ENCODE measurements at regions of chr12 and their contacts with region 1.

Region 1: DNA sequence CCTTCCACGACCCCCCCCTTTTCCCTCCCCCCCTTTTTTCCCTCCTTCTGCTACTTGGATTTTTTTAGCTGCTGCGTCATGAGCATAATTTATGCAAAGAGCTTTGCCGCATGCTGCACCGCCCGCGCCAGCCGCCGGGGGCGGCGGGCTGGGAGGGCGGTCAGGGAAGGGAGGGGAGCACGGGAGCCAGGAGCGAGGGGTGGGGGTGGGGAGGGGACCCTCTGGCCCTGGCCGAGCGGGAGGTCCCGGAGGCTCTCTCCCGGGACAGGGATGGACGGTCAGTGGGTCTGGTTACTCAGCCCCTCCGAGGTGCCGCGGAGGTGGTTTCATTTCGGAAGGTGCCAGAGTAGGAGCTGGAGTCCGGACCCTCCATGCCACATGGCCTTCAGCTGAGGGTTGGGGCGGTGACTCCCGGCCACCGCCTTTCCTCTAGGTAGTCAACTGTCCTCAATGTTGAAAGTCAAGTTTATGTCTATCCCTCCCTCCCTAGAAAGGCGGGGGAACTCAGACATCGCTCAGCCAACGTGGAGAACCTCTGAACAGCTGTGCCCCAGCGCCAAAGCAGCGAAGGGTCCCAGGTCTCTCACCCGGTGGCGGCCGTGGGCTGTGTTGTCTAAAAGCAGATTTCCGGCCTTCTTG is at the start of gene POU6F1:
- DNase-seq: peak; percentile 83
- H3K4me3 ChIP-seq: peak within 1 kb of the TSS; percentile 69
- H3K27ac ChIP-seq: peak within 1 kb of the TSS; percentile 40
- H3K4me1 ChIP-seq: peaks cover 21% of the 10 kb centered on the region
- CTCF ChIP-seq: peak; percentile 61
- total RNA-seq, gene POU6F1: 1.2 and 2.6 TPM in 2 replicates

Region 2: GRCh38 chr12:51083126-51083833 is 134.8 kb before region 1 on chr12 and contains the start of gene CSRNP2:
- CTCF ChIA-PET with region 1: no interaction called
- POLR2A ChIA-PET with region 1: interaction called, 6 read pairs
- intact Hi-C with region 1: loop called (anchors 10 kb)
- DNase-seq: peak; percentile 95
- H3K4me3 ChIP-seq: peak within 1 kb of the TSS; percentile 90
- H3K27ac ChIP-seq: no peak within 1 kb of the TSS
- H3K4me1 ChIP-seq: peaks cover 23% of the 10 kb centered on the region
- CTCF ChIP-seq: 0 out of 2 replicates have a peak, but pooled peaks have one; percentile 24
- total RNA-seq, gene CSRNP2: 10.4 and 11.7 TPM in 2 replicates

Region 3: DNA sequence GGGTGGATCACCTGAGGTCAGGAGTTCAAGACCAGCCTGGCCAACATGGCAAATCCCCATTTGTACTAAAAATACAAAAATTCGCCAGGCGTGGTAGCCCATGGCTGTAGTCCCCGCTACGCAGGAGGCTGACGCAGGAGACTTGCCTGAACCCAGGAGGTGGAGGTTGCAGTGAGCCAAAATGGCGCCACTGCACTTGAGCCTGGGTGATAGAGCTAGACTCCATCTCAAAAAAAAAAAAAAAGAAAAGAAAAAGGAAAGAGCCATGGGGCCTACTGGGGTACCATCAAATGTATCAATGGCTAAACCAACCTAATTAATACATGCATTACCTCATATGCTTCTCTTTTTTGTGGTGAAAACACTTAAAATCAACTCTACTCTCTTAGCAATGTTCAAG is 55.9 kb before region 1 on chr12:
- CTCF ChIA-PET with region 1: no interaction called
- POLR2A ChIA-PET with region 1: no interaction called
- intact Hi-C with region 1: no loop called
- DNase-seq: no peak
- H3K4me3 ChIP-seq: no peak overlapping the region
- H3K27ac ChIP-seq: no peak overlapping the region
- H3K4me1 ChIP-seq: no peaks in the 10 kb centered on the region
- CTCF ChIP-seq: no peak

Region 4: GRCh38 chr12:51172515-51173431 is 45.3 kb before region 1 on chr12 and contains the start of gene TFCP2:
- CTCF ChIA-PET with region 1: no interaction called
- POLR2A ChIA-PET with region 1: no interaction called
- intact Hi-C with region 1: loop called (anchors 5 kb)
- DNase-seq: peak; percentile 82
- H3K4me3 ChIP-seq: peak within 1 kb of the TSS; percentile 80
- H3K27ac ChIP-seq: peak within 1 kb of the TSS; percentile 3
- H3K4me1 ChIP-seq: peaks cover 8% of the 10 kb centered on the region
- CTCF ChIP-seq: no peak
- total RNA-seq, gene TFCP2: 7.1 and 7.2 TPM in 2 replicates

Region 5: DNA sequence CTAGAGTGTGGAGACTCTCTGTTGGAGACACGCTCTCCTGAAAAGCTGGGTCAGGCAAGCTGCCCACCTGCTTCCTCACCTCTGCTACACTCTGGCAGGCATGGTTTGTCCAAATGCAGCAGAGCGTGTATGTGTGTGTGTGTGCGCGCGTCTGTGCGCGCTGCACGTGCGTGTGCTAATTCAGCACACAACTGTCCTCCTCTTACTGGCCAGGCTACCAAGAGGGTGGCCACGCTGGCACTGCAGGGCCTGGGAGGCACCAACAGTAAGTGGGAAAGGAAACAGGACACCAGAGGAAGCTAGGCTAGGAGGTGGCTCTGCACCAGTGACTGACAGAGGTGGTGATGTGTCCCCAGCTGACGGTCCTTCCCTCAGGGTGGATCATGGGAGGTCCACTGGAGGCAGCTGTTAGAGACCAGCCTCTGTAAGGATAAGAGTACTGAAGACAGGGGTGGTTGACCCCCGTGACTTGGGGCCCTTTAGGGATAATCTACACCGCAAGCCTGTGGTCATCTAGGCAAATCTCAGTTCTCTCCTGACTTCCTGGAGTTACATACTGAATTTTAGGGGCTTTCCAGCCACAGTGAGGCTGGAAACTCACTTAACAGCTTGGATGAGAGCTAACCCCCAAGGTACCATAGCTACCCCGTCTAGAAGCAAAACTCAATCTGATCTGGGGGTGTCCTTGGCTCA is 29.6 kb before region 1 on chr12:
- CTCF ChIA-PET with region 1: no interaction called
- POLR2A ChIA-PET with region 1: interaction called, 9 read pairs
- intact Hi-C with region 1: loop called (anchors 2 kb)
- DNase-seq: peak; percentile 76
- H3K4me3 ChIP-seq: peak overlapping the region; percentile 57
- H3K27ac ChIP-seq: peak overlapping the region; percentile 67
- H3K4me1 ChIP-seq: peaks cover 52% of the 10 kb centered on the region
- CTCF ChIP-seq: no peak

Region 6: DNA sequence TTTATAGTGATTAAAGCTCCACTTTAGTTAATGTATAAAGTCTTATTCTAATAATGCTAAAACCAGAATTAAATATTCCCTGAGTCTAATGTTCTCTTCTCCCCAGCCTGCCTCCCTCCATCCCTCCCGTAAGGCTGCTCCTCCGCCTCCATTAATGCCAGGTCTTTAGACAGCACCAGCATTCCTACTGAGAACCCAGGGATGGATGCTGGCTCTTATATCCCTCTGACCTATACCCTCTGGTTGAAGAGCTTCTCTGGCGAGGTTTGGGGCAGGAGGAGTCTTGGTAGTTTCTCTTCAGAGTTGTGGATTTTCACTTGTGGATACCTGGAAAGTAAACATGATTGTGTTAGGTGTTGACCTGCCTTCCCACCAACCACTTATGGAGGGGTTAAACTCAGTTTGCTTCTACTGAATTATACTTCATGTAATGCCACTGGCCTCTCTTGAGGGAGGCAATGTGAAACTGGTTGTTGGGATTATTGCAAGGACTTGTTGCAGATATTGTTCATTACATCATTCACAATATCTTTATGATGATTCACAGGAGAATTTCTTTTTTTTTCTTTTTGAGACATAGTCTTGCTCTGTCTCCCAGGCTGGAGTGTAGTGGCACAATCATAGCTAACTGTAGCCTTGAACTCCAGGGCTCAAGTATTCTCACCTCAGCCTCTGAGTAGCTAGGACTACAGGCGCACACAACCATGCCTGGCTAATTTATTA is 63.3 kb after region 1 on chr12:
- CTCF ChIA-PET with region 1: no interaction called
- POLR2A ChIA-PET with region 1: no interaction called
- intact Hi-C with region 1: no loop called
- DNase-seq: no peak
- H3K4me3 ChIP-seq: no peak overlapping the region
- H3K27ac ChIP-seq: no peak overlapping the region
- H3K4me1 ChIP-seq: peaks cover 9% of the 10 kb centered on the region
- CTCF ChIP-seq: no peak

Region 7: GRCh38 chr12:51293696-51294095 is 75.6 kb after region 1 on chr12:
- CTCF ChIA-PET with region 1: no interaction called
- POLR2A ChIA-PET with region 1: no interaction called
- intact Hi-C with region 1: no loop called
- DNase-seq: no peak
- H3K4me3 ChIP-seq: no peak overlapping the region
- H3K27ac ChIP-seq: no peak overlapping the region
- H3K4me1 ChIP-seq: no peaks in the 10 kb centered on the region
- CTCF ChIP-seq: no peak

Measured in OCI-LY7 (cell line).